Endothelial cell of umbilical vein (primary cell): ENCODE measurements at regions of chr4 and their contacts with region 1.

Region 1: DNA sequence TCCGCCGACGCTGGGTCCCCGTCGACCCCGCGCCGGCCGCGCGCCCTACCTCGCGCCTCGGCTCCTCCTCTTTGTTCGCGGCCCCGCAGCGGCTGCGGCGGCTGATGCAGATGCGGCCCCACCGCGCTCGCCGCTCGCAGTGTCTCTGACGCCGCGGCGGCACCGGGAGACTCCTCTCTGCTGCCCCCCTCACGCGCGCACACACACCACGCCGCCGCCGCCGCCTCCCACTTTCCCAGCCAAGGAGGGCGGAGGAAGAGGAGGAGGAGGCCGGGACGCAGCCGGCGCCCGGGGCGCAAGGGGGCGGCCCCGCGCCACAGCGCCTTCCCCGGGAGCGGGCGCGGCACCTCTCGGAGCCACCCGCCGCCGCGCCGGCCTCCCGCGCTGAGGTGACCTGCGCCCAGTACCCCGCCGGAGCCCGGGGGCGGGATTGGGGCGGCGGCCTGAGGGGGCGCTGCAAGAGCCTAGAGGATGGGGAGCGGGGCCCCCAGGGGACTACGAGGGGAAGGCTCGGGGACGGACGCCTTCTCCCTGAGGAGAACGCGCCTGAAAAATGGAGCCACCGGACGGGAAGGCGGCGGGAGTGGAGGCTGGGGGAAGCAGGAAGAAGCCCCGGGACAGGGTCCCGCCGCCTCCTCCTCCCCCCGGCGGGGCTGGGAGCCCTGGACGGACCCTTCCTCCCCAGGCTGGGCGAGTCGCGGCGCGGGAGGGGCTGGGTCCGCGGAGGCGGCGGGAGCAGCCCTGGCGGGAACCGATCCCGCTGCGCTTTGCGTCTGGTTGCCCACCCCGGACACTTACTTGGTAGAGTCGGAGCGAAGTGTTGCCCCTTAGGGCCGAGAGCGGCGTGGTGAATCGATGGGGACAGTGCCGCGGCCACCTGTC is at the start of gene SH3RF1:
- DNase-seq: peak; percentile 88
- H3K4me3 ChIP-seq: peak within 1 kb of the TSS; percentile 63 to 99 (median 99)
- H3K27ac ChIP-seq: peak within 1 kb of the TSS; percentile 91
- H3K4me1 ChIP-seq: peaks cover 42% of the 10 kb centered on the region
- H3K27me3 ChIP-seq: no peaks in the 10 kb centered on the region
- CTCF ChIP-seq: no peak
- POLR2A ChIP-seq: peak; percentile 65
- total RNA-seq, gene SH3RF1: 24.3 and 24.9 TPM in 2 replicates

Region 2: GRCh38 chr4:169099771-169100180 is 171.3 kb before region 1 on chr4:
- CTCF ChIA-PET with region 1: no interaction called
- POLR2A ChIA-PET with region 1: no interaction called
- dilution Hi-C with region 1: no loop called
- intact Hi-C with region 1: loop called (anchors 1 kb)
- DNase-seq: peak; percentile 42
- H3K4me3 ChIP-seq: no peak overlapping the region
- H3K27ac ChIP-seq: peak overlapping the region; percentile 30
- H3K4me1 ChIP-seq: peaks cover 36% of the 10 kb centered on the region
- H3K27me3 ChIP-seq: no peaks in the 10 kb centered on the region
- CTCF ChIP-seq: no peak
- POLR2A ChIP-seq: no peak

Region 3: DNA sequence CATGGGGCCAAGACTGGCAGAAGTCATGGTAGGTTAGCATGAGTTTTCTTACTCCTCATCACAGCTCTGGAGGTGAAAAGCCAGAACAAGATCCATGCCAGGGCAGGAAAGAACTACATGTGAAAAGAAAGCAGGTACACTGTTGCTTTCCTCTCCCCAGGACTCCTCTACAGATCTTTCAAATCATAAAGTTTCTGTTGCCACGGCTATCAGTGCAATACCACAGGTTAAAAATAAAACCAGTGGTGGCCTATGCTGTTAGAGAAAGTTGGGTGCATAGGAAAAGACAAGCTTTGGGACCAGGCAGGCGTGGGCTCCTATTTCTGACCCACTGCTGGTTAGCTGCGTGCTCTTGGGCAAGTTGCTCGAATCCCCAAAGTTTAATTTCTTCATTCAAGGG is 81.7 kb before region 1 on chr4:
- CTCF ChIA-PET with region 1: no interaction called
- POLR2A ChIA-PET with region 1: no interaction called
- dilution Hi-C with region 1: no loop called
- intact Hi-C with region 1: no loop called
- DNase-seq: no peak
- H3K4me3 ChIP-seq: no peak overlapping the region
- H3K27ac ChIP-seq: no peak overlapping the region
- H3K4me1 ChIP-seq: no peaks in the 10 kb centered on the region
- H3K27me3 ChIP-seq: no peaks in the 10 kb centered on the region
- CTCF ChIP-seq: no peak
- POLR2A ChIP-seq: no peak

Region 4: GRCh38 chr4:169225058-169225751 is 45.8 kb before region 1 on chr4:
- CTCF ChIA-PET with region 1: interaction called, 5 read pairs
- POLR2A ChIA-PET with region 1: interaction called, 3 read pairs
- dilution Hi-C with region 1: no loop called
- intact Hi-C with region 1: loop called (anchors 1 kb)
- DNase-seq: peak; percentile 87
- H3K4me3 ChIP-seq: no peak overlapping the region
- H3K27ac ChIP-seq: peak overlapping the region; percentile 79
- H3K4me1 ChIP-seq: peaks cover 38% of the 10 kb centered on the region
- H3K27me3 ChIP-seq: no peaks in the 10 kb centered on the region
- CTCF ChIP-seq: no peak
- POLR2A ChIP-seq: no peak

Region 5: GRCh38 chr4:169260217-169260866 is 10.7 kb before region 1 on chr4:
- CTCF ChIA-PET with region 1: interaction called, 31 read pairs
- POLR2A ChIA-PET with region 1: interaction called, 9 read pairs
- dilution Hi-C with region 1: no loop called
- intact Hi-C with region 1: loop called (anchors 1 kb)
- DNase-seq: peak; percentile 86
- H3K4me3 ChIP-seq: peak overlapping the region in 1 of 3 experiments; percentile 44
- H3K27ac ChIP-seq: peak overlapping the region; percentile 45
- H3K4me1 ChIP-seq: peaks cover 70% of the 10 kb centered on the region
- H3K27me3 ChIP-seq: no peaks in the 10 kb centered on the region
- CTCF ChIP-seq: no peak
- POLR2A ChIP-seq: no peak

Region 6: GRCh38 chr4:169362607-169363006 is 91.6 kb after region 1 on chr4:
- CTCF ChIA-PET with region 1: no interaction called
- POLR2A ChIA-PET with region 1: no interaction called
- dilution Hi-C with region 1: no loop called
- intact Hi-C with region 1: no loop called
- DNase-seq: no peak
- H3K4me3 ChIP-seq: no peak overlapping the region
- H3K27ac ChIP-seq: no peak overlapping the region
- H3K4me1 ChIP-seq: no peaks in the 10 kb centered on the region
- H3K27me3 ChIP-seq: no peaks in the 10 kb centered on the region
- CTCF ChIP-seq: no peak
- POLR2A ChIP-seq: no peak

Region 7: DNA sequence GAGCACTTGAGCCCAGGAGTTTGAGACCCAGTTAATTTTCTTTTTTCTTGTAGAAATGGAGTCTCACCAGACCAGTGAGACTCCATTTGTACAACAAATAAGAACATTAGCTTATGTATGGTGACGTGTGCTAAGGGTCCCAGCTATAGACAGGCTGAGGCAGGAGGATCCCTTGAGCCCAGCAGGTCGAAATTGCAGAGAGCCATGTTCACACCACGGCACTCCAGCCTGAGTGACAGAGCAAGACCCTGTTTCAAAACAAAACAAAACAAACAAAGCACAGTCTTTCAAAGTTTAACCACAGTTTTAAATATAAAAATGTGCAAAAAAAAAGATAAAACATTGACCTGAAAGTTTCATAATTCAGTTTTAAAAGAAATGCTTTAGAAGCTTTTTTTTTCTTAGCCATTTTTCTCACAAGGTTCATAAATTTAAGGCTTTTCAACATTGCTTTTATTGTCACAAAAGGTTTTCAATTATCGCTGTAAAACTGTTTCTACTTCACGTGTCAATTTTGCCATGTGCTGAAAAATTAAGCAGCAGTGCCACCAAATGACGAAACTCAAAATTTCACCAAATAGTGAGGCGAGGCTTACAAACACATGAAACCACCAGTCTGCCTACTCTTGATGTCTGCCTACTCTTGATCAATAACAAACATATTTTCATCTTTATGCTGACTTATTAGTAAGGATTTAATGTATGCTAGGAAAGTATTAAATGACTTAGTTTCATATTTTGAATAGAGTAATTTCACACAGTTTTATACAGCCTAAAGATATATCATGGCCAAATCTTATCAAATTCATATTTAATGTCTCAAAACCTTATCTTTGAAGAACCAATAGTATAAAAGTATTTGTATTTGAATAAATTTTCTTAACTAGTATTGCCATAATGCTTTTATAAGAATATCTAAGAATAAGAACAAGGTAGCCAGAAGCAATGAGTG is 215.0 kb after region 1 on chr4:
- CTCF ChIA-PET with region 1: interaction called, 5 read pairs
- POLR2A ChIA-PET with region 1: no interaction called
- dilution Hi-C with region 1: no loop called
- intact Hi-C with region 1: loop called (anchors 1 kb)
- DNase-seq: peak; percentile 78
- H3K4me3 ChIP-seq: no peak overlapping the region
- H3K27ac ChIP-seq: no peak overlapping the region
- H3K4me1 ChIP-seq: peaks cover 3% of the 10 kb centered on the region
- H3K27me3 ChIP-seq: no peaks in the 10 kb centered on the region
- CTCF ChIP-seq: peak; percentile 39 to 52
- POLR2A ChIP-seq: no peak